Adrenal gland (tissue), 19 donors: ENCODE measurements at regions of chr16 and their contacts with region 1.

Region 1: DNA sequence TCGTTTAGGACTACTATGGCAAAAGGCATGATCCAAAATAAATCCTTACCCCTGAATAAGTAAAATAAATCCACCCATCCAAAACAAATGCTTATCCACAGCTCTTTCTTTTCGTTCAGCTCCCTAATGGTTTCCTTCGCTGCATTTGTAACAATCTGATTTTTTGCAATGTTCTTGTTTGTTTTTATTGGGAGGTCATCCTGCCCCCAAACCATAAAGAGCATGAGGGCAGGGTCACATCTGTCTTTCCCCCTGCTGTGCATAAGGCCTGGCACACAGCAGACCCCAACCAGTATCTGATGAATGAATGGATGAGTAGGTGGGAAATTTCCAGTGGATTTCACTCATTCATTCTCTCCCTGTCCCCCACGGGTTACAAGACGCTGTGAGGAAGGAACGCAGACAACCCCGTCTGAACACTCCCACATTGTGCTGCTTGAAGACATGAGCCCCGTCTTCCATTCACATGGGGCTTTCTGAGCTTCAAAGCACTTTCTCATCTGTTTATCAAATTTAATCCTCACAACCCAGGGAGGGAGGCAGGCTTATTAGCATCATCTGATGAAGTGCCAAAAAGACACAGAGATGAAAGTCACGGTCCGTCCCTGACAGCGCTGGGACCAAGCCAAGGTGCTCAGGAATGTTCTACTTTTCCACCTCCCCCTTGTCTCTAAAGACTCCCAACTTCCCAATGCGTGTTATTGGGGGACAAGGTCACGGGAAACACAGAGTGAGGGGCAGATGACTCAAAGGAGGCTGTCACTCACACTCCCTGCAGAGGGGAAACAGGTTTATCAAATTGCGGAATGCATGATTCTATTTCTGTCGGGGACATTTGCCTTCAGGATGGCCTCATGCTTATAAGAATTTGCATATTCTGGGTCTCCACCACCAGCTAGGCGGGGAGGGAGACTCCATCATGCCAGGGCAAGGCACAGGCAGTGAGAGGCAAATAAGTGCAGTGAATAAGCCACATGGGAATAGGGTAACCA is 10.9 kb downstream of the XYLT1 start:
- DNase-seq: peak; percentile 47 to 86 (median 77)
- H3K4me3 ChIP-seq: no peak overlapping the region
- H3K27ac ChIP-seq: peak overlapping the region in 3 of 5 donors; percentile 11 to 47 (median 35)
- H3K4me1 ChIP-seq: peaks cover 4 to 32% of the 10 kb centered on the region in 2 donors
- H3K27me3 ChIP-seq: no peaks in the 10 kb centered on the region
- CTCF ChIP-seq: no peak
- POLR2A ChIP-seq: no peak

Region 2: DNA sequence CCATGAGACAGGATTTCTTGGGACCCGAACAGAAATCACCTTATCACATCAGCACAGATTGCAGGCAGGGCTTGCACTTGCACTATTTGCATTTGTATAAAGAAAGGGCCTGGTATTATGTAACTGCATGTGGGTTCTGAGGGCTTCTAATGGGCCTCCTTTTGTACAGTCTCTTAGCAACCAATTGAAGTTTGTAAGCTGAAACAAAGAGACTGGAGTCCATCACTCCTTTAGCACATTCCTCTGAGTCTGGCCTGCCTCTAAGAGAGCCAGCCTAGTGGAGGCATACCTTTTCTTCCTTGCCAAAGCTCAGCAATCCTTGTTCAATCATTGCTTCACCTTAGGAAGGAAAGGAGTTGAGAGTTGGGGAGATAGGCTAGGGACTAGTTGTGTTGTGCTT is 376.2 kb before region 1 on chr16:
- intact Hi-C with region 1: no loop called
- DNase-seq: no peak
- H3K4me3 ChIP-seq: no peak overlapping the region
- H3K27ac ChIP-seq: no peak overlapping the region
- H3K4me1 ChIP-seq: no peaks in the 10 kb centered on the region
- H3K27me3 ChIP-seq: no peaks in the 10 kb centered on the region
- CTCF ChIP-seq: no peak
- POLR2A ChIP-seq: no peak

Region 3: DNA sequence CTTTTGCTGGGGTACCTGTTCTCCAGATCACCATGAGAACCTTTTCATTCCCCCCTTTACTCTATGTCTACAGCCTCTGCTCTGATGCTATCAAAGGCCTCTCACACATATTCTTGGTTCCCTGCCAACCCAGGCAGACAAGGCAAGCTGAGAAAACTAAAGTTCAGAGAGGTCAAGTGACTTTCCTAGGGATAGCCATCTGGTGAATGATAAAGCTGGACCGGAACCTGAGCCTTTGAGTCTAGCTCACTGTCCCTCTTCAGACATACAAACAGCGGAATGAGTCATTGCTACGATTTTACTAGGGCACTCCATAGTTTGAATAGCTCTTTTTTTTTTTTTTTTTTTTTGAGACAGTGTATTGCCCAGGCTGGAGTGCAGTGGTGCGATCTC is 62.3 kb before region 1 on chr16:
- intact Hi-C with region 1: loop called in 1 of 2 experiments (anchors 10 kb)
- DNase-seq: peak; percentile 58 to 89 (median 81)
- H3K4me3 ChIP-seq: no peak overlapping the region
- H3K27ac ChIP-seq: peak overlapping the region in 4 of 5 donors; percentile 61 to 79 (median 66)
- H3K4me1 ChIP-seq: peaks cover 18 to 36% of the 10 kb centered on the region in 2 donors
- H3K27me3 ChIP-seq: no peaks in the 10 kb centered on the region
- CTCF ChIP-seq: no peak
- POLR2A ChIP-seq: peak in 1 of 2 donors; percentile 18

Region 4: DNA sequence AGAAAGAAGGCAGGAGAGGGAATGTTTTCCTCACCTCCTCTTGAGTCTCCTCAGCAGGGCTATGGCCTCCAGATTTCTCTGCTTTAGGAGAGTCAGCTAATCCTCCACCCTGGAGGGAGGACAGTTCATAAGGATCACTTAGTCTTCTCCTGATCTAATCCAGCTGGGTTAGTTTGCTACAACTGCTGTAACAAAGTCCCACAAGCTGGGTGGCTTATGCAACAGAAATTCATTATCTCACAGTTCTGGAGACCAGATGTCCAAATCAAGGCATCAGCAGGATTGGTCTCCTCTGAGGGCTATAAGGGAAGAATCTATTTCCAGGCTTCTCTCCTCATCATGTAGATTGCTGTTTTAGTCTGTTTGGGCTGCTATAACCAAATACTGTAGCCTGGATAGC is 51.5 kb after region 1 on chr16:
- intact Hi-C with region 1: no loop called
- DNase-seq: no peak
- H3K4me3 ChIP-seq: no peak overlapping the region
- H3K27ac ChIP-seq: no peak overlapping the region
- H3K4me1 ChIP-seq: no peaks in the 10 kb centered on the region
- H3K27me3 ChIP-seq: peaks cover 2% of the 10 kb centered on the region
- CTCF ChIP-seq: no peak
- POLR2A ChIP-seq: no peak

Region 5: GRCh38 chr16:17696616-17697015 is 236.8 kb after region 1 on chr16:
- intact Hi-C with region 1: no loop called
- DNase-seq: no peak
- H3K4me3 ChIP-seq: no peak overlapping the region
- H3K27ac ChIP-seq: no peak overlapping the region
- H3K4me1 ChIP-seq: no peaks in the 10 kb centered on the region
- H3K27me3 ChIP-seq: no peaks in the 10 kb centered on the region
- CTCF ChIP-seq: no peak
- POLR2A ChIP-seq: no peak